Activated CD8-positive, alpha-beta memory T cell treated with anti-CD3 and anti-CD28 coated beads, Interleukin-2, amount 10 ng/mL, durations not matched to agents 7 days and 5 days (primary cell): ENCODE measurements at regions of chr1 and their contacts with region 1.

Region 1: GRCh38 chr1:198669023-198669698 is 30.3 kb downstream of the PTPRC start:
- DNase-seq: peak; percentile 71
- ATAC-seq: peak; percentile 82
- H3K4me3 Mint-ChIP-seq: peak overlapping the region; percentile 33
- H3K27ac Mint-ChIP-seq: peak overlapping the region; percentile 89
- H3K4me1 Mint-ChIP-seq: peaks cover 87% of the 10 kb centered on the region
- H3K27me3 Mint-ChIP-seq: no peaks in the 10 kb centered on the region

Region 2: GRCh38 chr1:198598796-198599321 is 70.3 kb before region 1 on chr1:
- CTCF ChIA-PET with region 1: no interaction called
- DNase-seq: peak; percentile 40
- ATAC-seq: peak; percentile 36
- H3K4me3 Mint-ChIP-seq: no peak overlapping the region
- H3K27ac Mint-ChIP-seq: peak overlapping the region; percentile 76
- H3K4me1 Mint-ChIP-seq: peaks cover 52% of the 10 kb centered on the region
- H3K27me3 Mint-ChIP-seq: no peaks in the 10 kb centered on the region

Region 3: GRCh38 chr1:198649968-198650338 is 19.2 kb before region 1 on chr1:
- CTCF ChIA-PET with region 1: interaction called, 10 read pairs
- DNase-seq: peak; percentile 66
- ATAC-seq: peak; percentile 73
- H3K4me3 Mint-ChIP-seq: peak overlapping the region; percentile 65
- H3K27ac Mint-ChIP-seq: peak overlapping the region; percentile 81
- H3K4me1 Mint-ChIP-seq: peaks cover 69% of the 10 kb centered on the region
- H3K27me3 Mint-ChIP-seq: no peaks in the 10 kb centered on the region

Region 4: GRCh38 chr1:198713081-198713480 is 43.9 kb after region 1 on chr1:
- CTCF ChIA-PET with region 1: no interaction called
- DNase-seq: no peak
- ATAC-seq: peak; percentile 28
- H3K4me3 Mint-ChIP-seq: no peak overlapping the region
- H3K27ac Mint-ChIP-seq: peak overlapping the region; percentile 44
- H3K4me1 Mint-ChIP-seq: peaks cover 30% of the 10 kb centered on the region
- H3K27me3 Mint-ChIP-seq: no peaks in the 10 kb centered on the region